ENCODE measurements at regions of chr3 and their contacts with region 1.

Region 1: DNA sequence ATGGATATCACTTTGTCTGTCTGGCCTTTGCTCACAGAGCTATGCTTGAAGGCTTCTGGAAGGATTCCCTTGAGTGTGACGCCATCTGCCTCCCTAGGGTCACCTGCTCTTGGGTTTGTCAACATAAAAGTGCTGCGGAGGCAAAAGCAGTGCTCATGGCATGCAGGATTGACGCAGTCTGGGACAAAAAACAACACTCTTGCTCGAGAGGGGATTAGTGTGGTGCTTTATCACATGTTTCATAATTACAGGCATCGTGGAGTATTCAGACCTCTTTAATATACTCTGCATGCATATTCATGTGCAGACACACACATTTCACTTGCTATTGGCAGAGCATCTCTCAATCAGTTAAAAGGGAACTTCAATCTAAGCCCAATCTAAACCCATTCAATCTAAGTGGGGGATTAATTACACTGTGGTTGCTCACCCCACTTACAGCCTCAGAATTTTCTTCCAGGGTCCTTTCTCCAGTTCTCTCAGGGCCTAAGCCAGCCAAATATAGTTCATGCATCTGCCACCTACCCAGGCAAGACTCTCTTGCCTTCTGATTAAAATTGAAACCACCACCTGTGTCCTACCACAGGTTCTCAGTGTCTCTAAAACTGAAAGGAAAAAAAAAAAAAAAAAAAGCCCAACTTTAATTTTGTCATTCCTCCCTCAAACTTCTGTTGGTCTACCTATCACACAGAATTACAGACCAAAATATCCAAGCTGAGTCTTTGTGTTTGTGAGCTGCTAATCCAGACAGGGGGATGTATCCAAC is 75.6 kb downstream of the BFSP2 start:
- DNase-seq: no peak
- ATAC-seq: peak; percentile 80
- H3K4me3 Mint-ChIP-seq: peak overlapping the region; percentile 64
- H3K27ac Mint-ChIP-seq: peak overlapping the region; percentile 92
- H3K4me1 Mint-ChIP-seq: peaks cover 71% of the 10 kb centered on the region
- H3K27me3 Mint-ChIP-seq: no peaks in the 10 kb centered on the region
- CTCF ChIP-seq: no peak

Region 2: DNA sequence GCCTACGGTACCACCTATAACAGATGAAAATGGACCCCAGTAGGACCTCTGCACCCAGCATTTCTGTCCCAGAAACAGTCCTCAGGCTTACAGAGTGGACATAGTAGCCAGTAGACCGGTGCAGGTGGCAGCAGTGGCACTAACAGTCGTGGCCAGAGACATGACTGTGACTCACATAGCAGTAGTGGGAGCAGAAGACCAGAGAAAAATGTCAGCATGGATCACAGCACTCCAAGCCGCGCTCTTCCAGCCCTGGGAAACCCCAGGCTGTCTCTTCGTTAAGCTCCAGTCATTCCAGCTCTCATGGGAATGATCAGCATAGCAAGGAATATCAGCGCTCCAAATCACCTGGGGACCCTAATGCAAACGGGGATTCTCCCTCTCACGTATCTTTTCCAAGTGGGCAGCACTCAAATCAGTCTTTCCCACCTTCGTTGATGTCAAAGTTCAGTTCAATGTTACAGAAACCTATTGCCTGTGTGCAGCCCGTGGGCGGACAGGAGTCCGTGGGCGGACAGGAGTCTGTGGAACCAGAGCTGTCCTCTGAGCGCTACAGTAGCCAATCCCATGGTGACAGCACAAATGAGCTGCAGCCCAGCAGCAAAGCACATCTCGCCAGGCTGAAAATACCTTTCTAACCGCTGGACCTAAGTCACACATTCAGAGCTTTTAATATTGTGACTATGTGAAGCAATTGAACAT is 65.1 kb before region 1 on chr3:
- CTCF ChIA-PET with region 1: no interaction called
- POLR2A ChIA-PET with region 1: interaction called, 10 read pairs
- intact Hi-C with region 1: no loop called
- DNase-seq: no peak
- ATAC-seq: no peak
- H3K4me3 Mint-ChIP-seq: no peak overlapping the region
- H3K27ac Mint-ChIP-seq: no peak overlapping the region
- H3K4me1 Mint-ChIP-seq: peaks cover 6% of the 10 kb centered on the region
- H3K27me3 Mint-ChIP-seq: peaks cover 4% of the 10 kb centered on the region
- CTCF ChIP-seq: no peak

Region 3: GRCh38 chr3:133448478-133449122 is 26.8 kb before region 1 on chr3:
- CTCF ChIA-PET with region 1: interaction called, 8 read pairs
- POLR2A ChIA-PET with region 1: interaction called, 33 read pairs
- intact Hi-C with region 1: loop called (anchors 1 kb)
- DNase-seq: peak; percentile 40
- ATAC-seq: peak; percentile 88
- H3K4me3 Mint-ChIP-seq: peak overlapping the region; percentile 80
- H3K27ac Mint-ChIP-seq: peak overlapping the region; percentile 95
- H3K4me1 Mint-ChIP-seq: peaks cover 55% of the 10 kb centered on the region
- H3K27me3 Mint-ChIP-seq: peaks cover 6% of the 10 kb centered on the region
- CTCF ChIP-seq: no peak

Region 4: GRCh38 chr3:133464573-133464972 is 10.9 kb before region 1 on chr3:
- CTCF ChIA-PET with region 1: interaction called, 4 read pairs
- POLR2A ChIA-PET with region 1: interaction called, 5 read pairs
- intact Hi-C with region 1: loop called (anchors 1 kb)
- DNase-seq: no peak
- ATAC-seq: no peak
- H3K4me3 Mint-ChIP-seq: no peak overlapping the region
- H3K27ac Mint-ChIP-seq: no peak overlapping the region
- H3K4me1 Mint-ChIP-seq: peaks cover 60% of the 10 kb centered on the region
- H3K27me3 Mint-ChIP-seq: no peaks in the 10 kb centered on the region
- CTCF ChIP-seq: no peak

Region 5: GRCh38 chr3:133487920-133488540 is 12.6 kb after region 1 on chr3:
- CTCF ChIA-PET with region 1: interaction called, 11 read pairs
- POLR2A ChIA-PET with region 1: interaction called, 17 read pairs
- intact Hi-C with region 1: loop called (anchors 1 kb)
- DNase-seq: no peak
- ATAC-seq: peak; percentile 20
- H3K4me3 Mint-ChIP-seq: no peak overlapping the region
- H3K27ac Mint-ChIP-seq: no peak overlapping the region
- H3K4me1 Mint-ChIP-seq: peaks cover 57% of the 10 kb centered on the region
- H3K27me3 Mint-ChIP-seq: no peaks in the 10 kb centered on the region
- CTCF ChIP-seq: no peak

Region 6: DNA sequence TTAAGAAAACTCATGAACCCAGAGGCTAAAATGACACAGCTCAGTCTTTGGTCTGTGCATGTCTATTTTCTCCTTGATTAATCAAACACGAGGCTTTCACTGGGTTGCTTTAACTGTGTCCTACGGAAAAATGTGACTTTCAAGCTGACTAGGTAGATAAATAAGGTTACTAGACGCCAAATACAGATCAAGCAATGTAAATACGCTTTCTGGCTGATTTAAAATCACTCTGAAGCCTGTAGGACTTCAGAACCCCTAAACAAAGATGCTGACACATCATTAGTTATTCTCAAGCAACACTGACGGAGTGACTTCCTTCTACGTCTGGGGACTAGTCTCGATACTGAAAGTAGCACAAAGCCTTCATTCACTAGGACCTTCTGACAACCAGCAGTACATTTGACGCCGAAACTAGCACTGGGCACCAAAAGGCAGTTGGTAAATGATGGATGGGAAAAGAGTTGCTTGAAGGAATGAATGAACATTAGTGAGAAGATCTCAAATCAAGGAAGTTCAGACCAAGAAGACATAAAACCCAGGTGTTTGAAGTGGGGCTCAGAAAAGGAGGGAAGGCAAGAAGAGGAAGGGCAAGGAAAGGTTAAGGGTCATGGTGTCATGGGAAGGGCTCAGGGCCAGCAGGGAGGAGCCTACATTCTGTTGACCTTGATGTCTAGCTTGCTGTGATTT is 30.9 kb after region 1 on chr3:
- CTCF ChIA-PET with region 1: no interaction called
- POLR2A ChIA-PET with region 1: no interaction called
- intact Hi-C with region 1: loop called (anchors 1 kb)
- DNase-seq: no peak
- ATAC-seq: peak; percentile 97
- H3K4me3 Mint-ChIP-seq: peak overlapping the region; percentile 56
- H3K27ac Mint-ChIP-seq: peak overlapping the region; percentile 60
- H3K4me1 Mint-ChIP-seq: peaks cover 13% of the 10 kb centered on the region
- H3K27me3 Mint-ChIP-seq: no peaks in the 10 kb centered on the region
- CTCF ChIP-seq: no peak

Region 7: DNA sequence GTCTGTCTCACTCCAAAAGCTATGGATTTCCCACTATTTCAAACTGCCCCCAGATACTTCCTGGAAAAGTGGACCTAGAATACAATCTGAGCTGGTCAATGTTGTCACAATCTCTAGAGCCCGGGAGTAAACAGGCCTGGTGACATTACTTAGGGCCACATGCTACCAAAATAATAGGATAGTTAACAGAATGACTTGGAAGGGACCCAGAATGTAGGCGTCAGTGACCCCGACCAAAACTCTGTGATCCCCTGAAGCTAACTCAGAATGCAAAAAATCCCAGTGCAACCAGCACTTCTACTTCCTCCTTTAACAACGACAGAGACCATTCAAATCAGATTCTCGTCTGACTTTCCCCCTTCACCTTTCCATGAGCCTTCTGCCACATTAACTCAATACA is 46.5 kb after region 1 on chr3:
- CTCF ChIA-PET with region 1: no interaction called
- POLR2A ChIA-PET with region 1: no interaction called
- intact Hi-C with region 1: loop called (anchors 5 kb)
- DNase-seq: no peak
- ATAC-seq: no peak
- H3K4me3 Mint-ChIP-seq: no peak overlapping the region
- H3K27ac Mint-ChIP-seq: no peak overlapping the region
- H3K4me1 Mint-ChIP-seq: peaks cover 15% of the 10 kb centered on the region
- H3K27me3 Mint-ChIP-seq: no peaks in the 10 kb centered on the region
- CTCF ChIP-seq: no peak